ENCODE measurements at regions of chr1 and their contacts with region 1.

Region 1: GRCh38 chr1:224615861-224616755 is at the start of gene CNIH3:
- ATAC-seq: peak; percentile 82 to 93 (median 92)
- H3K4me3 ChIP-seq: peak within 1 kb of the TSS; percentile 31 to 43 (median 33)
- H3K27ac ChIP-seq: no peak within 1 kb of the TSS
- H3K4me1 ChIP-seq: peaks cover 0 to 7% of the 10 kb centered on the region in 2 donors
- total RNA-seq, gene CNIH3: 2.4 to 13.5 (median 8.8) TPM

Region 2: GRCh38 chr1:224528900-224529299 is 87.2 kb before region 1 on chr1:
- in situ Hi-C with region 1: loop called in 1 of 9 experiments (anchors 10 kb)
- ATAC-seq: peak in 4 of 8 experiments; percentile 24 to 61 (median 35)
- H3K4me3 ChIP-seq: no peak overlapping the region
- H3K27ac ChIP-seq: no peak overlapping the region
- H3K4me1 ChIP-seq: no peaks in the 10 kb centered on the region

Measured in motor neuron (in vitro differentiated cells).